AG04450 (cell line): ENCODE measurements at regions of chr2 and their contacts with region 1.

Region 1: GRCh38 chr2:37068686-37069085 is 15.5 kb downstream of the HEATR5B start:
- DNase-seq: no peak
- H3K4me3 ChIP-seq: no peak overlapping the region
- H3K27ac ChIP-seq: no peak overlapping the region
- H3K27me3 ChIP-seq: no peaks in the 10 kb centered on the region
- CTCF ChIP-seq: no peak

Region 2: DNA sequence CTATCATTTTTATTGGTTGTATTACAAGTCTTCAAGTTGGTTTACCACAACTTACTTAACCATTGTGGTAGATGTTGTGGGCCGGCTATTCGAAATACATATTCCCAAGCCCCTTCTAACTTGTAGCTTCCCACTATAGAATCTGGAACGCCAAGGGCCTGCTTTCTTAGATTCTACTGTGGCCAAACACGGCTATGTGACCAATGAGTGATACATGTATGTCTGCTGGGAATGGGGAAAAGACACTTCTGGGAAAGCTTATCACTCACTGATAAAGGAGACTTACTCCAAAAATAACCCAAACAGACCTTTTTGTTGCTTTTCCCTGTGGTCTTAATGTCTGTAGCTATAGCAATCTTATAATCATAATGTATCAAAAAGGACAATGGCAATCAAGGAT is 126.8 kb before region 1 on chr2:
- CTCF ChIA-PET with region 1: no interaction called
- POLR2A ChIA-PET with region 1: no interaction called
- DNase-seq: no peak
- H3K4me3 ChIP-seq: no peak overlapping the region
- H3K27ac ChIP-seq: no peak overlapping the region
- H3K27me3 ChIP-seq: no peaks in the 10 kb centered on the region
- CTCF ChIP-seq: no peak

Region 3: GRCh38 chr2:36966370-36967235 is 102.1 kb before region 1 on chr2 and contains the start of gene STRN:
- CTCF ChIA-PET with region 1: no interaction called
- POLR2A ChIA-PET with region 1: interaction called, 14 read pairs
- DNase-seq: peak; percentile 79
- H3K4me3 ChIP-seq: peak within 1 kb of the TSS; percentile 91
- H3K27ac ChIP-seq: peak within 1 kb of the TSS; percentile 65
- H3K27me3 ChIP-seq: no peaks in the 10 kb centered on the region
- CTCF ChIP-seq: no peak
- polyA plus RNA-seq, gene STRN: 15.5 and 20.0 TPM in 2 replicates

Region 4: GRCh38 chr2:37090019-37090477 is 21.4 kb after region 1 on chr2:
- CTCF ChIA-PET with region 1: no interaction called
- POLR2A ChIA-PET with region 1: no interaction called
- DNase-seq: no peak
- H3K4me3 ChIP-seq: no peak overlapping the region
- H3K27ac ChIP-seq: no peak overlapping the region
- H3K27me3 ChIP-seq: no peaks in the 10 kb centered on the region
- CTCF ChIP-seq: no peak

Region 5: DNA sequence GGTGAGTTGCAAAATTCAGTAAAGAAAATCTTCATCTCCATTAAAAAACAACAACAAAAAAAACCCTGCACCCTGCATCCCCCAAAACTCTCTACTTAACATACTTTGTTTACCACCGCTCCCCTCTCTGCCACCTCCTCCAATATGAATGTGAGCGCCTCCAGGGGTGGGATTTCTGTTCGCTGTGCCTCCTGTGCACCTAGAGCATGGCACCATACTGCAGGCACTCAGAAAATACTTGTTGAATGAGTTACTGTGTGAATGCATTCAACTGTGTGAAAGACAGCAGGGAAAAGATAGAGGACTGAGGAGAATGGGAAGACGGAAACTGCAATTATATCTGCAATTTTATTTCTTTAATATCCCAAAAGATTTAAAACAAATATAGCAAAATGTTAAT is 158.2 kb after region 1 on chr2:
- CTCF ChIA-PET with region 1: no interaction called
- POLR2A ChIA-PET with region 1: no interaction called
- DNase-seq: no peak
- H3K4me3 ChIP-seq: no peak overlapping the region
- H3K27ac ChIP-seq: no peak overlapping the region
- H3K27me3 ChIP-seq: no peaks in the 10 kb centered on the region
- CTCF ChIP-seq: no peak